Endothelial cell of umbilical vein (primary cell): ENCODE measurements at regions of chr6 and their contacts with region 1.

Region 1: DNA sequence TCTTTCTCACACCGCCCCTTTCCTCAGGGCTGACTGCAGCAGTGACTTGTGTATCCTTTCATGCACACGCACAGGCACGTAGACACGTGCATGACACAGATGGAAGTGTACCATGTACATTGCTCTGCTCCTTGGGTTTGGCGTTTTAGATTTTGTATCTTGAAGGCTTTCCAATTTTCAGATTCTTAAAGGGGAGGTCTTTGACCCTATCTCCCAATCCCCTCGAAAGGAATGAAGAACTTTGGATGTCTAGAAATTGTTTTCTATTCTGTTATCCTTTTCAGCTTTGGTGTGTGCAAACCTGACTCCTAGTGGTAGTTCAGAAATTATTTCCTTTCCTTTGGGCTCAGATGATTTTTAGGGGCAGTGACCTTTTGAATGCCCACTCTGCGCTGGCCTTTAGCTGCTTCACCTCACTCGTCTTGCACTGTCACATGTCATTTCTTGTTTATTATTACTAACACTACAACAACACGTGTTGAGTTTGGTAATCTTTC is 63.0 kb downstream of the HIVEP1 start:
- DNase-seq: peak; percentile 34
- H3K4me3 ChIP-seq: no peak overlapping the region
- H3K27ac ChIP-seq: no peak overlapping the region
- H3K4me1 ChIP-seq: peaks cover 22% of the 10 kb centered on the region
- H3K27me3 ChIP-seq: no peaks in the 10 kb centered on the region
- CTCF ChIP-seq: peak; percentile 13 to 18
- POLR2A ChIP-seq: no peak

Region 2: GRCh38 chr6:11241793-11242201 is 833.3 kb before region 1 on chr6:
- CTCF ChIA-PET with region 1: no interaction called
- POLR2A ChIA-PET with region 1: no interaction called
- dilution Hi-C with region 1: no loop called
- intact Hi-C with region 1: no loop called
- DNase-seq: peak; percentile 41
- H3K4me3 ChIP-seq: no peak overlapping the region
- H3K27ac ChIP-seq: no peak overlapping the region
- H3K4me1 ChIP-seq: no peaks in the 10 kb centered on the region
- H3K27me3 ChIP-seq: no peaks in the 10 kb centered on the region
- CTCF ChIP-seq: peak; percentile 85 to 91
- POLR2A ChIP-seq: no peak

Region 3: GRCh38 chr6:11700118-11700718 is 374.9 kb before region 1 on chr6:
- CTCF ChIA-PET with region 1: no interaction called
- POLR2A ChIA-PET with region 1: no interaction called
- dilution Hi-C with region 1: no loop called
- intact Hi-C with region 1: loop called (anchors 1 kb)
- DNase-seq: peak; percentile 47
- H3K4me3 ChIP-seq: no peak overlapping the region
- H3K27ac ChIP-seq: no peak overlapping the region
- H3K4me1 ChIP-seq: no peaks in the 10 kb centered on the region
- H3K27me3 ChIP-seq: no peaks in the 10 kb centered on the region
- CTCF ChIP-seq: peak in 1 of 2 donors; percentile 16
- POLR2A ChIP-seq: no peak

Region 4: GRCh38 chr6:12051861-12052368 is 23.2 kb before region 1 on chr6:
- CTCF ChIA-PET with region 1: no interaction called
- POLR2A ChIA-PET with region 1: no interaction called
- dilution Hi-C with region 1: no loop called
- intact Hi-C with region 1: no loop called
- DNase-seq: no peak
- H3K4me3 ChIP-seq: no peak overlapping the region
- H3K27ac ChIP-seq: no peak overlapping the region
- H3K4me1 ChIP-seq: no peaks in the 10 kb centered on the region
- H3K27me3 ChIP-seq: no peaks in the 10 kb centered on the region
- CTCF ChIP-seq: no peak
- POLR2A ChIP-seq: no peak